ENCODE measurements at regions of chr6 and their contacts with region 1.

Region 1: GRCh38 chr6:41591859-41592502 is 45.8 kb downstream of the FOXP4 start:
- DNase-seq: peak; percentile 78
- H3K4me3 ChIP-seq: no peak overlapping the region
- H3K27ac ChIP-seq: no peak overlapping the region
- H3K4me1 ChIP-seq: peaks cover 7% of the 10 kb centered on the region
- H3K27me3 ChIP-seq: no peaks in the 10 kb centered on the region
- CTCF ChIP-seq: peak; percentile 93

Region 2: DNA sequence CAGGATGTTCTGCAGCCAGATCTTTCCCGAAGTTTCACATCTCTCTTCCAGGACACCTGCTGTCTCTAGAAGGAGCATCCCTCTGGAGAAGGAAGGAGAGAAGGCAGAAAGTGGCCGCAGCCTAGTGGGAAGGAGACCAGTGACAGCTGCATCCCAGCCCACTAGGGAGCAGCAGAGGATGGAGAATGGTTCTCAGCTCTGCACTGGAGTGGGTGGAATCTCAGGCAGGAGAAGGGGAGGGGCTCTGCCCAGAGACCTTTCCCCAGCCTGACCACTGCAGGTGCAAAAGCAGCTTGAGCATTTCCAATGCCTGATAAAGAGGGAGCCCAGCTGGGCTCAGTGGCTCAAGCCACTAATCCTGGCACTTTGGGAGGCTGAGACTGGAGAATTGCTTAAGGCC is 224.3 kb before region 1 on chr6:
- CTCF ChIA-PET with region 1: interaction called, 3 read pairs
- POLR2A ChIA-PET with region 1: no interaction called
- intact Hi-C with region 1: loop called (anchors 1 kb)
- DNase-seq: peak; percentile 77
- H3K4me3 ChIP-seq: no peak overlapping the region
- H3K27ac ChIP-seq: no peak overlapping the region
- H3K4me1 ChIP-seq: peaks cover 11% of the 10 kb centered on the region
- H3K27me3 ChIP-seq: no peaks in the 10 kb centered on the region
- CTCF ChIP-seq: peak; percentile 82

Region 3: DNA sequence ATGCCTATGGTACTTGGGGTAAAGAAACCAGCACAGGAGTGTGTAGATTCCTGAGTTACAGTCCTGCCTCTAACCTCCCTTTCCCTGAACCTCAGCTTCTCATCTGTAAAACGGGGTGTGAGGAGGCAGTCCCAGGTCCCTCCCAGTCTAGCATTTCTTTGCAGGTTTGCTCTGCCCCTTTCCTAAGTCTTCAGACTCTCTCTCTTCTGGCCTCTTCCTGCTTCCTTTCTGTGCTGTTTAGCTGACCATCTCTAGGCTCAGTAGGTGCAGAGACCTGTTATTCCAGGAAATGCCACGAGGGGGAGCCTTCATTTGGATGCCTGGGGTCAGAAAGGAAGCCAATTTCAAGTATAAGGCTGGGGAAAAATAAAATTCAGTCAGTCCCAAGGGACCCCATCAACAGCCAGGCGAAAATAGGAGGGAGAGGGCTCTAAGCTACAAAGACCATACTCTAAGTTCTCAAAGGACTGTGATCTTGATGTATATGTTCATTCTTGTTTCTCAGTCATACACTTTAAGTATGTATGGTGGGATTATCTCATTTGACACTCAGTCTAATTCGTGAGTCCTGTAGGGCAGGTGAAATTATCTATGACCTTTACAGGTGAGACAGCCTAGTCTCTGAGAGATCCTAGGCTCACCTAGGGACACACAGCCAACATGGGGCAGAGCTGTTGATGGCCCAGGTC is 167.5 kb before region 1 on chr6:
- CTCF ChIA-PET with region 1: interaction called, 6 read pairs
- POLR2A ChIA-PET with region 1: no interaction called
- intact Hi-C with region 1: loop called (anchors 1 kb)
- DNase-seq: peak; percentile 89
- H3K4me3 ChIP-seq: no peak overlapping the region
- H3K27ac ChIP-seq: no peak overlapping the region
- H3K4me1 ChIP-seq: peaks cover 19% of the 10 kb centered on the region
- H3K27me3 ChIP-seq: peaks cover 6% of the 10 kb centered on the region
- CTCF ChIP-seq: peak; percentile 93

Region 4: GRCh38 chr6:41531591-41532582 is 60.1 kb before region 1 on chr6:
- CTCF ChIA-PET with region 1: no interaction called
- POLR2A ChIA-PET with region 1: no interaction called
- intact Hi-C with region 1: loop called (anchors 5 kb)
- DNase-seq: peak; percentile 78
- H3K4me3 ChIP-seq: no peak overlapping the region
- H3K27ac ChIP-seq: peak overlapping the region; percentile 18
- H3K4me1 ChIP-seq: peaks cover 38% of the 10 kb centered on the region
- H3K27me3 ChIP-seq: no peaks in the 10 kb centered on the region
- CTCF ChIP-seq: no peak